Gastrocnemius medialis (tissue), 4 donors: ENCODE measurements at regions of chr16 and their contacts with region 1.

Region 1: GRCh38 chr16:87515475-87516330 is 22.9 kb upstream of the ZCCHC14 start:
- DNase-seq: no peak
- ATAC-seq: no peak
- H3K4me3 ChIP-seq: no peak overlapping the region
- H3K27ac ChIP-seq: no peak overlapping the region
- H3K4me1 ChIP-seq: peaks cover 12 to 14% of the 10 kb centered on the region in 2 donors
- H3K27me3 ChIP-seq: no peaks in the 10 kb centered on the region
- CTCF ChIP-seq: no peak
- POLR2A ChIP-seq: no peak

Region 2: DNA sequence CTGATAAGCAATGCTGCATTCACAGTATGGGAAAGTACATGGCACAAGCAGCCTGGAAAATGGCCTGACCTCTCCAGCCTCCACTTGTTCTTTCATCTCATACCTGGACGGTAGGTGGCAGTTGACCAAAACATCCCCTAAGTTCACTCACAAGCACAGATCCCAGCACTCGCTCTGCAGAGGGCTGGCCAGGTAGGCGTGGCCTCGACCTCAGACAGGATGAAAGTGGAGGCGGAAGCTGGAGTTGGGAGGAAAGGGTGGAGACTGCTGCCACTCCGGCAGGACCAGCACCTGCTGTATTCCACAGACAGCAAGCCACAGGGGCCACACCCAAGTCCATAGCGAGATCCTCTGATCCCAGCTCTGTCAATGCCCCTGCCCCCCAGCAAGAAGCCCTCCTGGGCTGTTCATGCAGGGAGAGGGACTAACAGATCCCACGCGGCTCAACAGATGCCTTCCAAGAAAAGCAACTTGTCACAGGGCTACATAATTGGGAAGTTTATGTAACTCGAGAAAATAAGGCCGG is 54.2 kb before region 1 on chr16:
- in situ Hi-C with region 1: no loop called
- intact Hi-C with region 1: loop called (anchors 2 kb)
- DNase-seq: peak; percentile 26 to 44
- ATAC-seq: peak in 1 of 2 donors; percentile 19
- H3K4me3 ChIP-seq: no peak overlapping the region
- H3K27ac ChIP-seq: peak overlapping the region; percentile 4 to 58 (median 48)
- H3K4me1 ChIP-seq: peaks cover 47 to 64% of the 10 kb centered on the region in 2 donors
- H3K27me3 ChIP-seq: no peaks in the 10 kb centered on the region
- CTCF ChIP-seq: peak in 3 of 5 experiments; percentile 20 to 36 (median 33)
- POLR2A ChIP-seq: no peak

Region 3: GRCh38 chr16:87492721-87493607 is 22.7 kb before region 1 on chr16 and contains the start of gene ZCCHC14:
- in situ Hi-C with region 1: no loop called
- intact Hi-C with region 1: loop called (anchors 1 kb)
- DNase-seq: peak; percentile 99
- ATAC-seq: peak; percentile 88 to 92
- H3K4me3 ChIP-seq: peak within 1 kb of the TSS; percentile 53 to 66 (median 60)
- H3K27ac ChIP-seq: peak within 1 kb of the TSS; percentile 67 to 75 (median 72)
- H3K4me1 ChIP-seq: peaks cover 41 to 42% of the 10 kb centered on the region in 2 donors
- H3K27me3 ChIP-seq: no peaks in the 10 kb centered on the region
- CTCF ChIP-seq: peak in 2 of 5 experiments; percentile 6 to 35
- POLR2A ChIP-seq: peak; percentile 89 to 93
- total RNA-seq, gene ZCCHC14: 8.9 to 10.7 (median 9.3) TPM

Region 4: GRCh38 chr16:87560428-87561199 is 44.9 kb after region 1 on chr16:
- in situ Hi-C with region 1: no loop called
- intact Hi-C with region 1: no loop called
- DNase-seq: peak in 1 of 2 donors; percentile 37
- ATAC-seq: peak in 1 of 2 donors; percentile 32
- H3K4me3 ChIP-seq: no peak overlapping the region
- H3K27ac ChIP-seq: peak overlapping the region in 1 of 4 donors; percentile 5
- H3K4me1 ChIP-seq: no peaks in the 10 kb centered on the region
- H3K27me3 ChIP-seq: peaks cover 0 to 10% (median 3%) of the 10 kb centered on the region in 3 donors
- CTCF ChIP-seq: no peak
- POLR2A ChIP-seq: no peak

Region 5: GRCh38 chr16:87621976-87622713 is 106.4 kb after region 1 on chr16:
- in situ Hi-C with region 1: no loop called
- intact Hi-C with region 1: no loop called
- DNase-seq: no peak
- ATAC-seq: no peak
- H3K4me3 ChIP-seq: no peak overlapping the region
- H3K27ac ChIP-seq: no peak overlapping the region
- H3K4me1 ChIP-seq: no peaks in the 10 kb centered on the region
- H3K27me3 ChIP-seq: peaks cover 10 to 23% (median 18%) of the 10 kb centered on the region in 3 donors
- CTCF ChIP-seq: no peak
- POLR2A ChIP-seq: no peak